Esophagus muscularis mucosa (tissue), 4 donors: ENCODE measurements at regions of chr17 and their contacts with region 1.

Region 1: GRCh38 chr17:12667299-12667958 is 1.7 kb downstream of the MYOCD start:
- DNase-seq: no peak
- H3K4me3 ChIP-seq: peak overlapping the region; percentile 73 to 82 (median 78)
- H3K27ac ChIP-seq: peak overlapping the region; percentile 91 to 96 (median 94)
- H3K4me1 ChIP-seq: peaks cover 9 to 63% (median 41%) of the 10 kb centered on the region in 4 donors
- H3K27me3 ChIP-seq: peaks cover 0 to 16% (median 0%) of the 10 kb centered on the region in 4 donors
- CTCF ChIP-seq: peak; percentile 58 to 73 (median 62)
- EP300 ChIP-seq: no peak
- POLR2A ChIP-seq: no peak

Region 2: DNA sequence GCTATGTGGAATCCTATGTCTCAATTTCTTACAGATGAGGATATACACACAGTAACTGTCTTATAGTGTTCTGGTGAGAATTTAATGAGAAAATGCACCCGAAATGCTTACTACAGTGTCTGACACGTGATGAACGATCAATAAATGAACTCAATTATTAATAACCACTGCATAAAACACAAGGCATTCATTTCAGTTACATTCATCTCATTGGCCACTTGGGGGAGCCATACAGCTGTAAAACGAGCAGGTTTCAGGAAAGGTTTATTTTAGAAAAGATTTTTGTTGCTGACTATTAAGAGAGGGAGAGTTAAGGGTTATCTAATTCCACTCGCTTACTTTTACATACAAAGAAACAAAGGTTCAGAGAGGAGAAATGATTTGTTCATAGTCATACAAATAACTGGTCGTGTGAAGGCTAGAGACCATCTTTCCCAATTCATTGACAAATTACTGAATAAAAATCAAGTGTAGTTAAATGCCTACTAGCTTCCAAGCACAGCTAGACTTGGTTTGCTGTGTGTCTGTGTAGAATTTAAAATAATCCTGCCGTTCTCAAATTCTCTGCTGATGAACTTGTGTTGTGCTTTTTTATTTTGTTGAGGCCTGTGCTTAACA is 486.7 kb before region 1 on chr17:
- intact Hi-C with region 1: loop called (anchors 2 kb)
- DNase-seq: no peak
- H3K4me3 ChIP-seq: peak overlapping the region in 1 of 4 donors; percentile 11
- H3K27ac ChIP-seq: peak overlapping the region; percentile 54 to 76 (median 67)
- H3K4me1 ChIP-seq: peaks cover 0 to 21% (median 7%) of the 10 kb centered on the region in 4 donors
- H3K27me3 ChIP-seq: no peaks in the 10 kb centered on the region
- CTCF ChIP-seq: peak; percentile 74 to 75 (median 74)
- EP300 ChIP-seq: no peak
- POLR2A ChIP-seq: no peak

Region 3: GRCh38 chr17:12256380-12256995 is 410.9 kb before region 1 on chr17:
- intact Hi-C with region 1: loop called (anchors 2 kb)
- DNase-seq: no peak
- H3K4me3 ChIP-seq: no peak overlapping the region
- H3K27ac ChIP-seq: peak overlapping the region in 3 of 4 donors; percentile 4 to 53 (median 49)
- H3K4me1 ChIP-seq: peaks cover 0 to 44% (median 39%) of the 10 kb centered on the region in 4 donors
- H3K27me3 ChIP-seq: no peaks in the 10 kb centered on the region
- CTCF ChIP-seq: peak; percentile 76 to 85 (median 82)
- EP300 ChIP-seq: no peak
- POLR2A ChIP-seq: no peak

Region 4: GRCh38 chr17:12342609-12343435 is 324.6 kb before region 1 on chr17:
- intact Hi-C with region 1: loop called (anchors 10 kb)
- DNase-seq: no peak
- H3K4me3 ChIP-seq: no peak overlapping the region
- H3K27ac ChIP-seq: no peak overlapping the region
- H3K4me1 ChIP-seq: peaks cover 0 to 7% (median 6%) of the 10 kb centered on the region in 4 donors
- H3K27me3 ChIP-seq: no peaks in the 10 kb centered on the region
- CTCF ChIP-seq: peak; percentile 13 to 47 (median 15)
- EP300 ChIP-seq: no peak
- POLR2A ChIP-seq: no peak

Region 5: DNA sequence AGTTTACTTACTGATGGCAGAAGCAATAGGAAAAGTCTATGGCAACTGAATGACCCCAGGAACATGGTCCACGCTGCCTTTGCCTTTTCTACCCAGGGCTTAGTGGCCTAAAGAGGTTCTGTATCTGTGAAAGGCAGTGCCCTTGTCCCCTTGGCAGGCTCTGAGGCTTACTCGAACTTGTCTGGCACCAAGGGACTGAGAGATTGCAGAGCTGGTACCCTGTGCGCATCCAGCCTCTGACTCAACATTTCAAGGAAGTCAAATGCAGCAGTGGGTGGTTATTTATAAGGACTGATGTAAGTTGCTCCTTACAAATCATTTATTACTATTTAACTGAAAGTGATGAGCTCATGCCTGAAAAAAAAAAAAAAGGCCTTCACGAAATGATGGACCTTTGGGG is 301.6 kb before region 1 on chr17:
- intact Hi-C with region 1: no loop called
- DNase-seq: peak; percentile 90
- H3K4me3 ChIP-seq: no peak overlapping the region
- H3K27ac ChIP-seq: peak overlapping the region; percentile 73 to 82 (median 76)
- H3K4me1 ChIP-seq: peaks cover 0 to 48% (median 32%) of the 10 kb centered on the region in 4 donors
- H3K27me3 ChIP-seq: no peaks in the 10 kb centered on the region
- CTCF ChIP-seq: no peak
- EP300 ChIP-seq: peak; percentile 45
- POLR2A ChIP-seq: no peak

Region 6: GRCh38 chr17:12463102-12463501 is 204.3 kb before region 1 on chr17:
- intact Hi-C with region 1: loop called (anchors 10 kb)
- DNase-seq: no peak
- H3K4me3 ChIP-seq: no peak overlapping the region
- H3K27ac ChIP-seq: peak overlapping the region; percentile 65 to 82 (median 72)
- H3K4me1 ChIP-seq: peaks cover 0 to 64% (median 36%) of the 10 kb centered on the region in 4 donors
- H3K27me3 ChIP-seq: no peaks in the 10 kb centered on the region
- CTCF ChIP-seq: no peak
- EP300 ChIP-seq: no peak
- POLR2A ChIP-seq: no peak

Region 7: DNA sequence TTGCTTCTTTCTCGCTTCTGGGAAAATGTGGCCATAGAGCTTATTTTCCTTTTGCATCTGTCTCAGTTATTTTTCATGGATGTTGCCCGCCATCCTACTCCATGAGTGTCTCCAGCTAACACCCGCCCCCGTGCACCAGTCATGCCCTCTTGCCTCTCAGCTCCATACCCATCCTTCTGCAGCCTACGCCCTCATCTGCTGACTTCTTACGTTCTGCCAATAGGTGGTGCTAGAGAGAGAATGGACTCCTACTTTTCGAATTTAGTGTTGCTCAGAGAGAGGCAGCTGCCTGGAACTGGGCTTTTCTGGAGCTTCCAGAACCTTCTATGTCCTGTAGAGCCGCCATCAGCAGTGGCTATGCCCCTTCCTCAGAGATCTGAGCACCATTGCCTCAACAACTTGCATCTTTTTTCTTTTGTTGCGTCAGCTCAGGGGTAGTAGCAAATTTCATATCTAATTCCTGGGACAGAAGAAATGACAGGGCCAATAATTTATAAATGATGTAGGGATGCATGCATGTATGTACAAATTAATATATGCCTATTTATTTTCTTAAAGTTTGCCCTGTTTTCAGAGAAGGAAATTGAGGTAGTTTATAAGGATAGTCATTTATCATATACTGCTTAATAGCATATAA is 121.4 kb before region 1 on chr17:
- intact Hi-C with region 1: loop called (anchors 5 kb)
- DNase-seq: no peak
- H3K4me3 ChIP-seq: no peak overlapping the region
- H3K27ac ChIP-seq: no peak overlapping the region
- H3K4me1 ChIP-seq: peaks cover 0 to 12% (median 5%) of the 10 kb centered on the region in 4 donors
- H3K27me3 ChIP-seq: no peaks in the 10 kb centered on the region
- CTCF ChIP-seq: peak; percentile 67 to 81 (median 69)
- EP300 ChIP-seq: no peak
- POLR2A ChIP-seq: no peak

Region 8: GRCh38 chr17:12744298-12744697 is 76.9 kb after region 1 on chr17:
- intact Hi-C with region 1: loop called (anchors 5 kb)
- DNase-seq: no peak
- H3K4me3 ChIP-seq: no peak overlapping the region
- H3K27ac ChIP-seq: peak overlapping the region; percentile 10 to 48 (median 39)
- H3K4me1 ChIP-seq: peaks cover 14 to 35% (median 25%) of the 10 kb centered on the region in 4 donors
- H3K27me3 ChIP-seq: no peaks in the 10 kb centered on the region
- CTCF ChIP-seq: no peak
- EP300 ChIP-seq: no peak
- POLR2A ChIP-seq: no peak

Region 9: GRCh38 chr17:12789777-12790609 is 122.6 kb after region 1 on chr17:
- intact Hi-C with region 1: no loop called
- DNase-seq: no peak
- H3K4me3 ChIP-seq: peak overlapping the region; percentile 78 to 90 (median 87)
- H3K27ac ChIP-seq: peak overlapping the region; percentile 75 to 83 (median 76)
- H3K4me1 ChIP-seq: peaks cover 7 to 25% (median 18%) of the 10 kb centered on the region in 4 donors
- H3K27me3 ChIP-seq: no peaks in the 10 kb centered on the region
- CTCF ChIP-seq: no peak
- EP300 ChIP-seq: no peak
- POLR2A ChIP-seq: no peak